Left lung (tissue), 14 donors: ENCODE measurements at regions of chr13 and their contacts with region 1.

Region 1: GRCh38 chr13:30114571-30115256 is 192.6 kb downstream of the KATNAL1 start:
- DNase-seq: peak; percentile 78 to 98 (median 90)
- ATAC-seq: peak; percentile 84
- H3K4me3 ChIP-seq: peak overlapping the region; percentile 38 to 50
- H3K27ac ChIP-seq: peak overlapping the region; percentile 73
- H3K4me1 ChIP-seq: peaks cover 3 to 32% of the 10 kb centered on the region in 2 donors
- H3K27me3 ChIP-seq: peaks cover 0 to 12% of the 10 kb centered on the region in 2 donors
- CTCF ChIP-seq: peak; percentile 79 to 88

Region 2: GRCh38 chr13:29508130-29508875 is 606.4 kb before region 1 on chr13:
- intact Hi-C with region 1: loop called in 1 of 2 experiments (anchors 5 kb)
- DNase-seq: peak; percentile 75 to 92 (median 82)
- ATAC-seq: peak; percentile 93
- H3K4me3 ChIP-seq: no peak overlapping the region
- H3K27ac ChIP-seq: no peak overlapping the region
- H3K4me1 ChIP-seq: no peaks in the 10 kb centered on the region
- H3K27me3 ChIP-seq: peaks cover 0 to 36% of the 10 kb centered on the region in 2 donors
- CTCF ChIP-seq: peak; percentile 97 to 98

Region 3: DNA sequence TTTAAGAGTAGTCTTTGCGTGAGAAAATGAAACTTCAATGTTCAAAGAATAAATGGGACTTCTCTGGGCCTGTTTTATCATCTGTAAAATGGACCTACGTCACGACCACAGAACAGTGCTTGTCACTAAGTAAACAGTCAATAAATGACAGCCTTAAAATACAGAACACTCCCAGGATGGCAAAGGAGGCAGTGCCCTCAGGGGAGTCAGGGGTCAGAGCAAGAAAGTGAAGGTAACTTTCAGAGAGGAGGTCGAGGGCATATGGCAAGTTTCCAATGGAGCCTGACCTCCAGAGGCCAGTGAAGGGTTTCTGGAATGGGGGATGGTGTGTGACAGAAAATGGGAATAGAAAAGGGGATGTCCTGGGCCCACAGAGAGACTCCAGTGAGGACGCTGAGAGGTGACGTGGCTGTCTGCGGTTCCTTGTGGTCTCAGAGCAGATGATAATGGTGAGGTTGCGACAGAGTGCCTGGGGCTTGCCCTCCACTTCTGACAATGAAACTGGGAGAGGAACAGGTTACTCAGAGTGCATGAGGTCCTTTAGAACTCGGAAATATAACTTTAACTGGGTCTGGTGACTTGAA is 356.1 kb before region 1 on chr13:
- intact Hi-C with region 1: loop called in 1 of 2 experiments (anchors 10 kb)
- DNase-seq: peak in 2 of 4 donors; percentile 81 to 85
- ATAC-seq: peak; percentile 79
- H3K4me3 ChIP-seq: no peak overlapping the region
- H3K27ac ChIP-seq: peak overlapping the region in 1 of 2 donors; percentile 23
- H3K4me1 ChIP-seq: peaks cover 0 to 11% of the 10 kb centered on the region in 2 donors
- H3K27me3 ChIP-seq: no peaks in the 10 kb centered on the region
- CTCF ChIP-seq: no peak

Region 4: DNA sequence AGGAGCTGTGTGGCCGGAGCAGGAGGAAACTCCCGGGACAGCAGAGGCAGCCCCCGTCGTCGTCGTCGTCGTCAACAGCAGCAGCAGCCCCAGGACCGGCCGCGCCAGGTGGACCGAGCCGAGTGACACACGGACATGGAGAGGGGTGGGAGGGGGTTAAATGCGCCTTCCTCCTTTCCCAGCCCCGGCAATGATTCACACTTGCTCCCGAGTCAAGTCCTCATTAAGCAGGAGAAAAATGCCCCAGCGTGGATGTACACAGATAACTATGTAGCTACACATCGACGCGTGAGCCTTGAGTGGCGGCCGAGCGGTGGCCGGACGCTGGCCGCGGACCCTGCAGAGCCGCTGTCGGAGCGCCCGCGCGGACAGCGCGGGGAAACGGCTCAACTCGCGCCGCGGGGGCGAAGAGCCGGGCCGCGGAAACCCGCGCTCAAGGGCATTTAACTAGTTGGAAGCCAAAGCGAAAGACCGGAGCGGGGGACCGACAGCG is 264.9 kb before region 1 on chr13:
- intact Hi-C with region 1: loop called in 1 of 2 experiments (anchors 5 kb)
- DNase-seq: peak; percentile 67 to 92 (median 76)
- ATAC-seq: peak; percentile 45
- H3K4me3 ChIP-seq: peak overlapping the region; percentile 52 to 88
- H3K27ac ChIP-seq: peak overlapping the region; percentile 96 to 99
- H3K4me1 ChIP-seq: peaks cover 15 to 31% of the 10 kb centered on the region in 2 donors
- H3K27me3 ChIP-seq: no peaks in the 10 kb centered on the region
- CTCF ChIP-seq: no peak